ENCODE measurements at regions of chr12 and their contacts with region 1.

Region 1: DNA sequence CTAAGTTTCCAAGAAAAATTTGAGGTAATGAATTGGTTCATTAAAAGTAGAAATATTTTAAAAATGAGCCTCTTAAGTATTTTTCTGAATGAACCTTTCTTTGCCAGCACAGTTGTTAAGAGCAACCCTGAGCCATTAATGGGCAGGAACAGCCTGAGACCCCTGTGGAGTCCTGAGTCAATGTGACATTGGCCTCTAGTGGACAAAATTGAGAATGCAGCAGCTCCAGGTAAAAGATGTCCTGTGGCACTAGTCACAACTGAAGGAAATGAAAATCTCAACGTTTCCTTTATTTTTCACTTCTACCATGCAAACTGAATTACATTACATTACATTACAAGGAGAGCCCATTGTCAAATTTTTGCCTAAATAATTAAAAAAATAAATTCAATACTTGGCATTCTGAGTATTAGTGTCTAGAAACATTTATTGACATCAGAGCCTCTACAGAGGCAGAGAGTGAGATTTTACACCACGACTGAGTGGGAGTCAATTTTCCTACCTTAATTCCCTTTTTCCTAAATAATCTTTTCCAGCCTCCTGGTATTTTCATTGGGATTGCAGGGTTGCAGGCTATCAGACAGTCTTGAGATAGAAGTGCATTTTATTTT is 135.7 kb downstream of the PPM1H start:
- DNase-seq: no peak

Region 2: GRCh38 chr12:62435303-62436163 is 363.7 kb before region 1 on chr12:
- intact Hi-C with region 1: loop called (anchors 5 kb)
- DNase-seq: peak; percentile 74

Region 3: DNA sequence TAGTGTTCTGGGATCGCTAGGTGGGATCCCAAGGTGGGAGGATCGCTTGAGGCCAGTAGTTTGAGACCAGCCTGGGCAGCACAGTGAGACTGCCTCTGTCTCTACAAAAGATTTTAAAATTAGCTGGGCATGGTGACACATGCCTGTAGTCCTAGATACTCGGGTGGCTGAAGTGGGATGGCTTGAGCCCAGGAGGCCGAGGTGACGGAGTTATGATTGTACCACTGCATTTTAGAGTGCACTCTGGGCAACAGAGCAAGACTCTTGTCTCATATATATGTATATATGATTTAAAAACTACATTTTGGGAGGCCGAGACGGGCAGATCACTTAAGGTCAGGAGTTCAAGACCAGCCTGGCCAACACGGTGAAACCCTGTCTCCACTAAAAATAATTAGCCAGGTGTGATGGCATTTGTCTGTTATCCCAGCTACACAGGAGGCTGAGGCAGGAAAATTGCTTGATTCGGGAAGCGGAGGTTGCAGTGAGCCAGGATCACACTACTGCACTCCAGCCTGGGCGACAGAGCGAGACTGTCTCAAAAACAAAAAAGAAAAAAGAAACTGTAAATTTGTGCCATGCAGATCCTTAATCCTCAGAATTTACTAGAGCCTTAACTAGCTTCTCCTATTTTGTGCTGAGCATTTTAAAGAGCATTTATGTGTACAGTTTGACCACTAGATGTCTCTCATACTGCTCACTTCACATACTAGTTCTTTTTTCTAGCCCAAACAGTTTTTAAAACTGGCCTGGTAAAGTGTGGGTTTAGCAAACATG is 217.8 kb before region 1 on chr12:
- intact Hi-C with region 1: loop called (anchors 1 kb)
- DNase-seq: no peak

Measured in cardiac septum (tissue), 1 donor.